ENCODE measurements at regions of chr9 and their contacts with region 1.

Region 1: GRCh38 chr9:88587182-88587581 is 52.2 kb downstream of the NXNL2 start:
- DNase-seq: no peak
- ATAC-seq: no peak

Region 2: DNA sequence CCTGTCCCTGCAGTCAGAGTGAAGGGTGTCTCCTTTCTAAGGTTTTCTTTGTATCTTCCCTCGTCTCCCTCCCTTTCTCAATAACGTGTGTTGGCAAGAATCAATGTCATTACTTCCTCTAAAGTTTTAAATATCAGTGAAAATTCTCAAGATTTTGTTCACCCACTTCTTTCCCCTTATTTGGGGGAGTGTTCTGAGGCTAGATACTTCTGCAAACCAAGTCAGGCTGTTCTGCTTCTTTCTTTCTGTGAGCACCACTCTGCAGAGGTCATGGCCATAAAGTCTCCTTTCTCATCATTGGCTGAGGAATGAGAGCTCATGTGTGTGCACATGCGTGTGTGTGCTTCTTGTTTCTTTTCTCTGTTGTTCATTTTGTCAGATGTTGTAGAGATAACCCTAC is 422.3 kb before region 1 on chr9:
- intact Hi-C with region 1: loop called in 1 of 2 experiments (anchors 5 kb)
- DNase-seq: no peak
- ATAC-seq: no peak

Region 3: DNA sequence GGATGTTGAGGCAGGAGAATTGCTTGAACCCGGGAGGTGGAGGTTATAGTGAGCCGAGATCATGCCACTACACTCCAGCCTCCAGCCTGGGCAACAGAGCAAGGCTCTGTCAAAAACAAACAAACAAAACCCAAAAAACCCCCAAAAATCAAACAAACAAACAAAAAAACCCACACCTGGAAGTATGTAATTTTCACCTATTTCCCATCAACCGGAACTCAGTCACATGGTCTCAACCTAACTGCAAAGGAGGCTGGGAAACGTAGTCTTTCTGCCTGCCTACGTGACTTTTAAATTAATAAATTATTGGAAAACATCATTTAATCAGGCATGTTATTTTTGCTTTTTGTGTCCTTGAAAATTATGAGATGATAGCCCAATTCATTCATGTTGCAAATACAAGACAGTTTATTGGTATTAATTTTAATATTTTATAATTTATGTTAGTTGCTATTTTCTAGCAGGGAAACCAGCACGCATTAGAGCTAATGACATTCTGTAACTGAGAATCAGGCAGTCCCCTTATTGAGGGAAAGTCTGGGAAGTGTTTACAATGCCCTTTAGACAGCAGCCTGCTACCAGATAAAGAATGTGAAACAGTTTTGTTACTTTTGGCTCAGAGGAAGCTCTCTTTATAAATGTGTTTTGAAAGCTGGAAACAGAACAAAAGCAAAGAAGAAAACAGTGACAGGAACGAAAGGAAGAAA is 58.1 kb after region 1 on chr9:
- intact Hi-C with region 1: no loop called
- DNase-seq: no peak
- ATAC-seq: peak in 1 of 2 donors; percentile 29

Region 4: GRCh38 chr9:89194421-89195130 is 607.4 kb after region 1 on chr9:
- intact Hi-C with region 1: no loop called
- DNase-seq: no peak
- ATAC-seq: no peak